Prostate gland (tissue), 2 donors: ENCODE measurements at regions of chr22 and their contacts with region 1.

Region 1: DNA sequence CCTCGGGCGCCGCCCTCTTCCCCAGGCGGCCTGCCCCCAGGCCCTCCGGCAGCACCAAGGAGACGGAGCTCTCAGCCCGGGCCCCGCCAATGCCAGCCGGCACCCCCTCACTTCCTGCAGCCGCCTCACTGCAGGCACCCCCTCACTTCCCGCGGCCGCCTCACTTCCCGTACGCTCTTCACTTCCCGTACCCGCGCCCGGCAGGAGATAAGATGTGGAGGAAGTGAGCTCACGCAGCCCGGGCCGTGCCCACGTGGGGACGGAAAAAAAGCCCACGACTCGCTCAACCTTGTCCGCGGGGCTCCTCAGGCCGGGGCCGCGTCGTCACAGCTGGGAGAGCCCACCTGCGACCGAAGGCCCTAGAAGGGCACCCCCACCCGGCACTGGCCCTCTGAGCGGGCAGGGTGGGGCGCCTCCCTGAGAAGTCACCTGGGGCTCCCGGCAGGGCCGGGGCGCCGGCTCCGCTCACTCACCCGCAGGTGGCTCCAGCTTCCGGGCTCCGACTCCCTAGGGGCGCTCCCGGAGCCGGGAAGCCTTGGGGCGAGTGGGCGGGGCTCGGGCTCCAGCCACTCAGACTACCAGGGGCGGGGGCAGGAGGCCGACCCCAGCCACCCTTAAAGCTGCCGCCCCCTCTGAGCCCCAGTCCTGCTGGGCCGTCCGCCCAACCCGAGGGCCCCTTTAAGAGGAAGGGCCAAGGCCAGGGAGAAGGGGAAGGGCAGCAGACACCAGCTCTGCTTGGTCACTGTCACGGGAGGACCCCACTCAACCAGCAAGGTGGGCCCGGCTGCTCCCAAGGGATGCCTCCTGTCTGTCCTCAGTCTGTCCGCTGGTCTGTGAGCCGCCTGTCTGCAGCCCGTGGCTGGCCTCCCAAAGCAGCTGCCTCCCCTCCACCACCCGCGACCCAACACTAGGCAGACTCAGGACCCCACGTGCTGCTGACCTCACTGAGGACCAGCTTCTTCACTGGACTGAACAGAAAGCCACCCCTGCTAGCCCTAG is 31.4 kb downstream of the PISD start:
- DNase-seq: peak; percentile 43
- H3K4me3 ChIP-seq: peak overlapping the region; percentile 43 to 62
- H3K27ac ChIP-seq: peak overlapping the region; percentile 54 to 73
- H3K4me1 ChIP-seq: peaks cover 19% of the 10 kb centered on the region
- H3K27me3 ChIP-seq: no peaks in the 10 kb centered on the region
- CTCF ChIP-seq: no peak
- POLR2A ChIP-seq: no peak

Region 2: DNA sequence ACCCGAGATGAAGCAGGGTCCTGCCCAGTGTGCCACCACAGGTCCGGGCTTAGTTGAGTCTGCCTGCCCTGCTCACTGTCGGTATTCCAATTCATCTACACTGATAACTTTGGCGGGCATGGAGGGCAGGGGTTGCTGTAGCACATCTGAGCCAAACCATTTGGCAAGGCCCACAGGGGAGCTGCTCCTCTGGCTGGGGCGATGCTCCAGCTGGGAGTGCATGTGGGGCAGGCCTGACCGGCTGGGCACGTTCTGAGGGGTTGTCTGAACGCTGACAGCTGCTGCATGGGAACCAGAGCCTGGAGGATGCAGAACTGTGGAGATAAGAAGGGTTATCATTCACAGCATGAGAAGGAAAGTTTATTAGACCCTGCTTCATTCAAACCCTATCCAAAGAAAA is 190.8 kb before region 1 on chr22:
- intact Hi-C with region 1: loop called (anchors 10 kb)
- DNase-seq: no peak
- H3K4me3 ChIP-seq: no peak overlapping the region
- H3K27ac ChIP-seq: no peak overlapping the region
- H3K4me1 ChIP-seq: no peaks in the 10 kb centered on the region
- H3K27me3 ChIP-seq: no peaks in the 10 kb centered on the region
- CTCF ChIP-seq: no peak
- POLR2A ChIP-seq: no peak

Region 3: GRCh38 chr22:31561238-31561887 is 69.3 kb before region 1 on chr22:
- intact Hi-C with region 1: loop called (anchors 2 kb)
- DNase-seq: peak; percentile 74
- H3K4me3 ChIP-seq: no peak overlapping the region
- H3K27ac ChIP-seq: peak overlapping the region in 1 of 2 donors; percentile 3
- H3K4me1 ChIP-seq: no peaks in the 10 kb centered on the region
- H3K27me3 ChIP-seq: no peaks in the 10 kb centered on the region
- CTCF ChIP-seq: peak in 3 of 4 experiments; percentile 58 to 81 (median 70)
- POLR2A ChIP-seq: no peak